ENCODE measurements at regions of chr1 and their contacts with region 1.

Region 1: GRCh38 chr1:90707363-90707710 is 9.8 kb downstream of the BARHL2 start:
- DNase-seq: no peak
- H3K4me3 ChIP-seq: no peak overlapping the region
- H3K27me3 ChIP-seq: peaks cover 43% of the 10 kb centered on the region
- CTCF ChIP-seq: no peak

Region 2: DNA sequence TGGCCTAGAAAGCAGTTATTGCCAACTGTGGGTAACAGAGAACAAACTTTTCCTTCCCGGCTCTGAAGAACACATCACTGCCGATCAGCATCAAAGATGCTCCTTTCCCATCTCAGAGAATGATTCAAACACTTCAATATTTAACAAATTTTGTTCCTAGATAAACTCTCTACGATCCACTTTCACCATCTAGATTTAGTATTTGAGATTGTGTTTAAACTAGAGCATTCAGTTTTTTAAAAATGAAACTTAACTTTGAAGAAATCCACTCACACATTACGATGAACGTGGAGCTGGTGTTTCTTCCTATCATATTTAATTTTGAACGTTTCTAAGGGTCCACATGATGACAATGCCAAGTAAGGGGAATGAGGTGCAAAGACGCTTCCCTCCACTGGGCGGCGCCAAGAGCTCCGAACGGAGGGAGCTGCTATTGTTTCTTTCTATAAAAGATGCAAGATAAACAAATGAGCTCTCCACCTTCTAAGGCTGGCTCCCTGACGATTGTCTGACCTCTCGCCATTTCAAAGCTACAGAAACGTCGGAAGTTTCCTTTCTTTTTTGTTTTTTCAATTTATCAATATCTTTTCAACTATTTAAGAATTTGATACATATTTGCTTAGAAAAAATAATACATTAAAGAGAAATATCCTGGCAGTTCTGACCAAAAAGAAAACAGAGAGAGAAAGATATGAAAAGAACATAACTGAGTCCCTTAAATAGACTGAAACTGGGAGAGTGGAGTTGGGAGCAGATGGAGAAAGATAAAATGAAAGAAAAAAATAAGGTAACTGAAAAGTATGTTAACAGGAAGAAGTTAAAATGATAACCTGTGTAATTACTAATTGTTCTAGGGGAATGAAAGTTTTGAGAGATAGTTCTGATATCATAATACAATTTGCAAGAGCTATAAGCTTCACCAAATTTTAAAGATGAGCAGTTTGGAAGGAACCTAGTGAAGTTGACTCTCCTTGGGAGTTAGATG is 14.2 kb after region 1 on chr1:
- CTCF ChIA-PET with region 1: interaction called, 10 read pairs
- POLR2A ChIA-PET with region 1: no interaction called
- DNase-seq: peak; percentile 1
- H3K4me3 ChIP-seq: no peak overlapping the region
- H3K27me3 ChIP-seq: peaks cover 72% of the 10 kb centered on the region
- CTCF ChIP-seq: peak; percentile 92

Region 3: GRCh38 chr1:90850898-90851710 is 143.8 kb after region 1 on chr1:
- CTCF ChIA-PET with region 1: no interaction called
- POLR2A ChIA-PET with region 1: no interaction called
- DNase-seq: peak; percentile 7
- H3K4me3 ChIP-seq: peak overlapping the region; percentile 52
- H3K27me3 ChIP-seq: peaks cover 4% of the 10 kb centered on the region
- CTCF ChIP-seq: peak; percentile 40

Measured in BJ (cell line).